ENCODE measurements at regions of chr9 and their contacts with region 1.

Region 1: DNA sequence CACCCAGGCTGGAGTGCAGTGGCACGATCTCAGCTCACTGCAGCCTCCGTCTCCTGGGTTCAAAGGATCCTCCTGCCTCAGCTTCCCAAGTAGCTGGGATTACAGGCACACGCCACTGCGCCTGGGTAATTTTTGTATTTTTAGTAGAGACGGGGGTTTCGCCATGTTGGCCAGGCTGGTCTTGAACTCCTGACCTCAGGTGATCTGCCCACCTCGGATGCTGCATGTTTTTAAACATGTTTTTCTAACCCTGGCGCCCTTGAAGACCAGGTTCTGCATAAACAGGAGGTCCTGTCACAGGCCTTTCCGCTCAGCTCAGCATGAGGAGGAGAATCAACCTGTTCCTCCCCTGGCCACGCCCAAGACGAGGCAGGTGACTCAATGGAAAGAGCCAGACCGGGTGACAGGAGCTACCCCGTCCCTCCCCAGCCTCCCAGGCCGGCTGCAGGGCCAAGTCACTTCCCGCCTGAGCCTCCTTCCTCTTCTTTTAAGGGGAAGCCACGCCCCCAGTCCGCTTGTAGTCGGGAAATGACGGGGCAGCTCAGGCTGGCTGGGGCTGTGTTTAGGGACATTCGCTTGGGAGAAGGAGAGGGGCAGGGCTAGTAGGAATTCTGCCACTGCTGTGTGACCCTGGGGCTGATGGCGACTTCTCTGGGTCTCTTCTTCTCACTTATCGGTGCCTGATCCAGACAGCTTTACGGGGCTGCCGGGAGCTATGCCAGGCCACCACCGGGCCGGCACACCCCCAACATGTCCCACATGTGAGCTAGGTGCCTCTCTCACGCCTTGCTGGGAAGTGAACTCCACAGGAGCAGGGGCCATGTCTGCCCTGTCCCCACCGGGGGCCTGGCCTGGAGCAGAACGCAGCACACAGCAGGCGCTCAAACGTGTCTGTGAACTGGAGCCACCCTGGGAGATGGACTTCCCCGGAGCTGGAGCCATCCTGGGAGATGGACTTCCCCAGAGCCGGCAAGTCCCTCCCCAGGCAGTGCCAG is 6.1 kb downstream of the NOTCH1 start:
- DNase-seq: peak; percentile 74 to 92 (median 86)
- H3K4me3 ChIP-seq: peak overlapping the region in 1 of 4 donors; percentile 13
- H3K27ac ChIP-seq: peak overlapping the region; percentile 3 to 91 (median 60)
- H3K4me1 ChIP-seq: peaks cover 0 to 31% of the 10 kb centered on the region in 2 donors
- H3K27me3 ChIP-seq: no peaks in the 10 kb centered on the region
- CTCF ChIP-seq: no peak
- POLR2A ChIP-seq: peak in 1 of 2 donors; percentile 34

Region 2: GRCh38 chr9:136619742-136620440 is 80.2 kb after region 1 on chr9:
- intact Hi-C with region 1: loop called in 1 of 2 experiments (anchors 5 kb)
- DNase-seq: peak in 6 of 7 donors; percentile 58 to 76 (median 64)
- H3K4me3 ChIP-seq: no peak overlapping the region
- H3K27ac ChIP-seq: peak overlapping the region in 3 of 5 donors; percentile 9 to 66 (median 59)
- H3K4me1 ChIP-seq: peaks cover 0 to 11% of the 10 kb centered on the region in 2 donors
- H3K27me3 ChIP-seq: no peaks in the 10 kb centered on the region
- CTCF ChIP-seq: no peak
- POLR2A ChIP-seq: no peak

Region 3: GRCh38 chr9:137138722-137139467 is 599.2 kb after region 1 on chr9 and contains the start of gene GRIN1:
- intact Hi-C with region 1: no loop called
- DNase-seq: peak in 4 of 7 donors; percentile 35 to 61 (median 51)
- H3K4me3 ChIP-seq: no peak within 1 kb of the TSS
- H3K27ac ChIP-seq: no peak within 1 kb of the TSS
- H3K4me1 ChIP-seq: peaks cover 0 to 4% of the 10 kb centered on the region in 2 donors
- H3K27me3 ChIP-seq: peaks cover 85% of the 10 kb centered on the region
- CTCF ChIP-seq: no peak
- POLR2A ChIP-seq: no peak
- total RNA-seq, gene GRIN1: 0.04 to 0.28 (median 0.08) TPM in 4 of 9 donors, not detected in the others

Measured in adrenal gland (tissue), 19 donors.